PC-9 (cell line): ENCODE measurements at regions of chr9 and their contacts with region 1.

Region 1: DNA sequence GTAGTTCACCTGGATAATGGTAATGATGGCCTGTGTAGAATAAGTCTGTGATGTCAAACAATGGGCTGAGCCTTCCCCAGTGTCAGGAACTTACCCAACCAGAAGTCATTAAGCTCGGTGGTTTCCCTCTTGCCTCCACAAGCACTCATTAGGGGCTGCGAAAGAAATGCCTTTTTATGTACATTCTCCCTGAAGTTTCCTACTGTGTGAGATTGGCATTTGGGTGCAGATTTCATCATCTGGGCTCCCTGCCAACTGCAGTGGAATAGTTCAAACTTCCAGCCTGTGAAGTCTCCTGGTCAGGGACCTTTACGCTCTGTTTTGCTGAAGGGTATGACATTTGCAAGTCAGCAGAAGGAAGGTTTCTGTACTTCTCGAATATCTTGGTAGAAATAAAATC is 41.6 kb upstream of the TMEM215 start:
- DNase-seq: peak; percentile 42 to 82
- H3K4me3 ChIP-seq: no peak overlapping the region; the same call in 1 of the 2 replicates
- H3K27ac ChIP-seq: peak overlapping the region; percentile 86
- H3K4me1 ChIP-seq: peaks cover 61% of the 10 kb centered on the region
- H3K27me3 ChIP-seq: no peaks in the 10 kb centered on the region
- CTCF ChIP-seq: no peak

Region 2: GRCh38 chr9:32603914-32604741 is 137.6 kb before region 1 on chr9:
- CTCF ChIA-PET with region 1: no interaction called
- POLR2A ChIA-PET with region 1: no interaction called
- intact Hi-C with region 1: loop called (anchors 1 kb)
- DNase-seq: peak; percentile 67 to 88
- H3K4me3 ChIP-seq: peak overlapping the region; percentile 38; the same call in 1 of the 2 replicates
- H3K27ac ChIP-seq: peak overlapping the region; percentile 71
- H3K4me1 ChIP-seq: peaks cover 15% of the 10 kb centered on the region
- H3K27me3 ChIP-seq: no peaks in the 10 kb centered on the region
- CTCF ChIP-seq: no peak

Region 3: DNA sequence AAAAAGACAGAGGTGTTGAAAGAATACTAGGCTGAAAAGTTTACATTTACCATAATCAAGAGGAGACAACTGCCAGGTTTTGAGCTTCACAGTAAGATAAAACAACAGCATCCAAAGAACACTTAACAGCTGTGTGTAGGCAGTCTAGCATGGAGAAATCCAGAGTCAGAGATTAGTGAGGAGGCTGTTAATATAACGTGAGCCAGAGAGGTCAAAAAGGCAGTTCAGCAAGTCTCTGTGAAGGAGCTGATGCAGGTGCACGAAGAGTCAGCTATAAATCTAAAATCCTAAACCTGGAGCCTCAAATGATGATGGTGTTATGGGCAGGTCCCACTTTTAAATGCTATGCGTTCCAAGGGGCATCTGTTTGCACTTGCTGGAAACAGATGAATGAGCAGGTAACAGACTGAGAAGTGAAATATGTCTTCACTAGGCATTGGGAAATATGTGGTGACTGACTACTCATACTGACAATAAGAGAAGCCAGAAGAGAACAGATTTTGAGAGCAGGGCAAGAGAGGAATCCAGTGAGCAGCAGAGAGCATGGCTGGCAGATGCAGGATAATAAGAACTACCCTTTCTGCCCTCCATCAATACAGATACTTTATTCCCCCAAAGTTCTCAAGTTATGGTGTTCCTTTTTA is 251.0 kb after region 1 on chr9:
- CTCF ChIA-PET with region 1: no interaction called
- POLR2A ChIA-PET with region 1: no interaction called
- intact Hi-C with region 1: no loop called
- DNase-seq: no peak
- H3K4me3 ChIP-seq: no peak overlapping the region
- H3K27ac ChIP-seq: no peak overlapping the region
- H3K4me1 ChIP-seq: no peaks in the 10 kb centered on the region
- H3K27me3 ChIP-seq: no peaks in the 10 kb centered on the region
- CTCF ChIP-seq: no peak